PC-9 (cell line): ENCODE measurements at regions of chr13 and their contacts with region 1.

Region 1: DNA sequence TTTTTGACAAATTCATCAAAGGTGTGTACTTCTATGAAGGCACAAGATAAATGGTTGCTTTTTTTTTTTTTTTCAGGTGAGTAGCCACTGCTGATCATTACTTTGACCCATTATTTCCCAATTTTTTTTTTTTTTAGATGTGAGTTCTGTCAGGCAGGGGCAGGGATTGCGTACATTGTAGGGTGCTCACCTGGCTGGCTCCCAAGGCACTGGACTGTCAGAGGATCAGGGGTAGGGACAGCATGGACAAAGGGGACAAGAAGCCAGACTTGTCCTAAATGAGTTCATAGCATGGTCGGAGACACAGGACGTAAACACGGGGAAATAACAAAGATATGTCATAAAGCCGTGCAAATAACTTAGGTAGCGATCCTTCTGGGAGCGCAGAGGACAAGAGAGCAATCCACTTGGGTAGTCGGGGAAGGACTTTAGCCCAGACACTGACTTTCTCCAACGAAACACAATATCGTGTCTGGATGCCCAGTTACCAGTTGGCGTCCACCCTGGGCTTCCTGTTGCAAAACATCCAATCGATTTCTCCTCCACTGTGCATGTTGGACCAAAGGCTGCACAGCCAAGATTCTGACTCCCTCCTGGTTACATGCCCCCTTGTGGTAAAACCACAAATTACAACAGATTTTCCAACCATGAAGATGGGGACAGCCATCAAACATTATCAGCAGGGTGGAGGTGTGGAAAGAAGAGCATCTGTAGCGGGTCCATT is 27.5 kb upstream of the KATNAL1 start:
- DNase-seq: no peak
- H3K4me3 ChIP-seq: no peak overlapping the region
- H3K27ac ChIP-seq: no peak overlapping the region
- H3K4me1 ChIP-seq: peaks cover 22% of the 10 kb centered on the region
- H3K27me3 ChIP-seq: no peaks in the 10 kb centered on the region
- CTCF ChIP-seq: peak; percentile 60

Region 2: DNA sequence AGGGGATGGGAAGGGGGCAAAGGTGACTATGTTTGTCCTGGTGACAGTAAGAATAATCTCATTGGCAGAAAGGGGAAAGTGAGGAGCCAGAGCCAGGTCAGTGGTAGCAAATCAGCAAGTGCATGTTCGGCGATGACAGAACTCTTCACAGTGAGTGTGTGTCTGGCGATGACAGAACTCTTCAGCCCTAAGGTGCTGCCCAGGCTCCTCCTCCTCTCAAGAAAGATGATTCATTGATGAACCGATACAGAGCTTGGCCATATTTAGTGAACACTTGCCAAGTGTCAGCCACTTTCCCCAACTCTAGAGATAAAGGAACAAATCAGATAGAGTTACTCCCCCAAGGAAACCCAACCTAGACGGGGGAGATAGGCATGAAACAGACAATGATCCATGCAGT is 285.1 kb before region 1 on chr13:
- CTCF ChIA-PET with region 1: interaction called, 15 read pairs
- POLR2A ChIA-PET with region 1: no interaction called
- intact Hi-C with region 1: no loop called
- DNase-seq: peak; percentile 19 to 38
- H3K4me3 ChIP-seq: no peak overlapping the region
- H3K27ac ChIP-seq: no peak overlapping the region
- H3K4me1 ChIP-seq: peaks cover 6% of the 10 kb centered on the region; the same call in 1 of the 2 replicates
- H3K27me3 ChIP-seq: no peaks in the 10 kb centered on the region
- CTCF ChIP-seq: no peak

Region 3: DNA sequence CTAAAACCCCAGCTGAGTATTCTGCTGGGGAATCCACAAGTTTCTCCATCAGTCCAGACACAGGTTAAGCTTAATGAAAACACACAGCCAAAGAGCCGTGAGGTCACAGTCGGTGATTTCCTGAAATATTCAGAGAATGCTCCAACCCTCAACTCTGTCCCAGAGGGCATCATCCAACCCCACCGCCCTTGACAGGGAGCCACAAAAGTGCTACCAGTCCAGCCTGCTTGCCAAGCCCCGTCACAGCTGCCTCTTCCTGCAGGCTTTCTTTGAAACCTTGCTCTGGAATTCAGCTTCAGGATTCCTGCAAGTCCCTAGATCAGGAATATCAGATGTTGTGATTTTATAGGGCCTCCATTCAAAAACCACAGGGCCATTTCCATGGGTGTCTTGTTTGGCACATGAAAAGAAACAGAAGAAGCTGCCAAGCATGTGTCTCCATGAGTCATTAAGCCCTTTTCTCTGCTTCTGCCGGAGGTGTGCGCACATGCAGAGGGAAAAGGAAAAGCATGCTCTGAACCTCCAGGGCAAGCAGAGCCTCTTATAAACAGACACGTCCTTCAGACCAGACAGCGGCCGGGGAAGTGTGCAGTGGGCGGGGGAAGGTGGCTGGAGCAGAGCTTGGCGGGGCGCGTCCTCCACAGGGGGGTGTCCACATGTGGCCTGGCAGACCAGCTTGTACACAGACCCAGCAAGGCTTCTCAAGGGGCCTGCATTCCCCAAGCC is 192.2 kb before region 1 on chr13:
- CTCF ChIA-PET with region 1: no interaction called
- POLR2A ChIA-PET with region 1: no interaction called
- intact Hi-C with region 1: loop called (anchors 1 kb)
- DNase-seq: peak; percentile 87 to 96
- H3K4me3 ChIP-seq: no peak overlapping the region; the same call in 1 of the 2 replicates
- H3K27ac ChIP-seq: peak overlapping the region; percentile 83
- H3K4me1 ChIP-seq: peaks cover 34% of the 10 kb centered on the region
- H3K27me3 ChIP-seq: no peaks in the 10 kb centered on the region
- CTCF ChIP-seq: no peak

Region 4: GRCh38 chr13:30224732-30225131 is 110.1 kb before region 1 on chr13:
- CTCF ChIA-PET with region 1: no interaction called
- POLR2A ChIA-PET with region 1: no interaction called
- intact Hi-C with region 1: no loop called
- DNase-seq: no peak
- H3K4me3 ChIP-seq: no peak overlapping the region
- H3K27ac ChIP-seq: no peak overlapping the region
- H3K4me1 ChIP-seq: no peaks in the 10 kb centered on the region
- H3K27me3 ChIP-seq: no peaks in the 10 kb centered on the region
- CTCF ChIP-seq: no peak